ENCODE measurements at regions of chr4 and their contacts with region 1.

Region 1: DNA sequence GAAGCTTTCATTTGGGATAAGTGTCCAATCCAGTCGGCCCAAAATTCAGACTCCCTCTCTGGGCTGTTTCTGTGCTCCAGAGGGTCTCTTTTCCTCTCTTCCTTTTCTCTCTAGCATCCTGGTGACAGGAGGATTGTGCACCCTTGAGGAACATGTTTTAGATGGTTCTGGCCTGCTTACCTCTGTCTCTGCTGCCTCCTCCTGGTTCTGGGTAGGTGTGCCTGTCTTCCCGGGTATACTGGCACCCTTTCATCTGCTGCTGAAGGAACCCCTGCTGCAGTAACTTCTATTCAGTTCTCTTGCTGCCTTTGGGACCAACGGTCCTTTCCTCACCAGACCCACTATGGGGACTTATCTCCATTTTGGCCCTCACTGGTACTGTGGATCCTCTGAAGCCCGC is 53.2 kb downstream of the HMGB2 start:
- DNase-seq: peak in 1 of 4 experiments; percentile 42
- ATAC-seq: peak; percentile 79
- H3K4me3 ChIP-seq: peak overlapping the region; percentile 36
- H3K27ac ChIP-seq: peak overlapping the region; percentile 76
- H3K4me1 ChIP-seq: peaks cover 7 to 17% of the 10 kb centered on the region in 2 experiments
- H3K27me3 ChIP-seq: no peaks in the 10 kb centered on the region
- CTCF ChIP-seq: peak; percentile 54 to 63 (median 62)
- EP300 ChIP-seq: no peak
- POLR2A ChIP-seq: no peak
- RAD21 ChIP-seq: peak; percentile 37 to 50

Region 2: DNA sequence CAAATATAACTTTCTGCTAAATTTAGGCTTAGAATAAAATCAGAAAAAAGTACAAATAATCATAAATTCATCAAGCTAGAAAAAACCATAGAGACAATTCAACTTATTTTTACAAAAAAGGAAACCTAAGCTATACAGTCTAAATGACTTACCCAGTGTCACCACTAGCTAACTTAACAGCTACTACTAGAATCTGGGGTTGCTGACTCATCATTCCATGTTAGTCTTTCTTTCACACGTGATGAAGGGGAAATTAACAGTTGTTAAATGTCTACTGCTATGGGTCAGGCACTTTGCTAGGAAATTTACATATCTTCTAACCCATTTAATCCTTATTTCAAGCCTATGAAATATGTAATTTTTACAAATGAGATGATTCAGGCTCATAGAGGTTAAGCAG is 461.6 kb before region 1 on chr4:
- CTCF ChIA-PET with region 1: no interaction called
- POLR2A ChIA-PET with region 1: no interaction called
- in situ Hi-C with region 1: no loop called
- intact Hi-C with region 1: no loop called
- DNase-seq: no peak
- ATAC-seq: 0 out of 3 replicates have a peak, but pooled peaks have one; percentile 22
- H3K4me3 ChIP-seq: no peak overlapping the region
- H3K27ac ChIP-seq: no peak overlapping the region
- H3K4me1 ChIP-seq: no peaks in the 10 kb centered on the region
- H3K27me3 ChIP-seq: no peaks in the 10 kb centered on the region
- CTCF ChIP-seq: no peak
- EP300 ChIP-seq: no peak
- POLR2A ChIP-seq: no peak
- RAD21 ChIP-seq: no peak

Region 3: GRCh38 chr4:172953896-172954568 is 327.0 kb before region 1 on chr4:
- CTCF ChIA-PET with region 1: no interaction called
- POLR2A ChIA-PET with region 1: no interaction called
- in situ Hi-C with region 1: no loop called
- intact Hi-C with region 1: no loop called
- DNase-seq: no peak
- ATAC-seq: no peak
- H3K4me3 ChIP-seq: no peak overlapping the region
- H3K27ac ChIP-seq: no peak overlapping the region
- H3K4me1 ChIP-seq: peaks cover 0 to 14% of the 10 kb centered on the region in 2 experiments; a peak in 3 of 5 replicates
- H3K27me3 ChIP-seq: peaks cover 0 to 5% of the 10 kb centered on the region in 2 experiments; a peak in 1 of 5 replicates
- CTCF ChIP-seq: no peak
- EP300 ChIP-seq: no peak
- POLR2A ChIP-seq: no peak
- RAD21 ChIP-seq: no peak

Region 4: DNA sequence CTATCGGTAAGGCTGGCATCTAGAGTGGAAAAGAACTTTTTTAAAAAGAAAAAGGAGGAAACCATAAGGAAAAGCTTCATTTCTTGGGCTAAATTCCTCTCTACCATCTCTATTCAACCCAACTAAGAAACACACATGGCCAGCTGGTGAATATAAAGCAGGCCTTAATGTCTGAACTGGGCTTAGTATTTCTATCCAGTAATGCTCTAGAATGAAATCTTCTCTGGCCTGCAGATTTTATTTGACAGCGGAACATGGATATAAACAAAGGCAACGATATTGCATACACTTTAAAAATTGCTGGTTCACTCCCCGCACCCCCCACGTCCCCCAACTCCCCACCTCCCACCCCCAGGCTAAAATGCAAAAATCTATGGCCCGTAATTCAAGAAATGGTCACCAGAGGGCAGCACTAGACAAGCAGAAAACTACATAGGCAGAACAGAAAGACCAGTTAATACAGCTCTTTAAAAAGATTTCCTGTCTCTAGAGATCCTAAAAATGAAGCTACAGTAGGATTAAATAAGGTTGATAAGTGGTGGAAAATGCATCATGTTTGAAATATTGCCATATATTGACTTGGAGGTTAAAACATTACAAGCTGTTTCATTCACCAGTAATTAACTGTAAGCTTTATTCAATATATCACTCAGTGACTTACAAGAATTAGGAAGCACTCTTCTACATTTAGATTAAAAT is 267.6 kb before region 1 on chr4:
- CTCF ChIA-PET with region 1: interaction called, 3 read pairs
- POLR2A ChIA-PET with region 1: no interaction called
- in situ Hi-C with region 1: no loop called
- intact Hi-C with region 1: loop called (anchors 1 kb)
- DNase-seq: peak; percentile 57 to 62 (median 62)
- ATAC-seq: peak; percentile 82
- H3K4me3 ChIP-seq: no peak overlapping the region
- H3K27ac ChIP-seq: no peak overlapping the region
- H3K4me1 ChIP-seq: peaks cover 0 to 4% of the 10 kb centered on the region in 2 experiments; a peak in 1 of 5 replicates
- H3K27me3 ChIP-seq: no peaks in the 10 kb centered on the region; a peak in 1 of 5 replicates
- CTCF ChIP-seq: peak; percentile 42 to 74 (median 64); a peak in 5 of 6 replicates
- EP300 ChIP-seq: no peak
- POLR2A ChIP-seq: no peak
- RAD21 ChIP-seq: peak; percentile 66 to 77

Region 5: GRCh38 chr4:173025131-173025530 is 255.9 kb before region 1 on chr4:
- CTCF ChIA-PET with region 1: interaction called, 3 read pairs
- POLR2A ChIA-PET with region 1: no interaction called
- in situ Hi-C with region 1: no loop called
- intact Hi-C with region 1: loop called (anchors 1 kb)
- DNase-seq: peak; percentile 52 to 77 (median 58)
- ATAC-seq: peak; percentile 95
- H3K4me3 ChIP-seq: no peak overlapping the region
- H3K27ac ChIP-seq: no peak overlapping the region
- H3K4me1 ChIP-seq: no peaks in the 10 kb centered on the region
- H3K27me3 ChIP-seq: no peaks in the 10 kb centered on the region
- CTCF ChIP-seq: peak; percentile 72 to 87 (median 73)
- EP300 ChIP-seq: no peak
- POLR2A ChIP-seq: no peak
- RAD21 ChIP-seq: peak; percentile 87 to 93

Region 6: DNA sequence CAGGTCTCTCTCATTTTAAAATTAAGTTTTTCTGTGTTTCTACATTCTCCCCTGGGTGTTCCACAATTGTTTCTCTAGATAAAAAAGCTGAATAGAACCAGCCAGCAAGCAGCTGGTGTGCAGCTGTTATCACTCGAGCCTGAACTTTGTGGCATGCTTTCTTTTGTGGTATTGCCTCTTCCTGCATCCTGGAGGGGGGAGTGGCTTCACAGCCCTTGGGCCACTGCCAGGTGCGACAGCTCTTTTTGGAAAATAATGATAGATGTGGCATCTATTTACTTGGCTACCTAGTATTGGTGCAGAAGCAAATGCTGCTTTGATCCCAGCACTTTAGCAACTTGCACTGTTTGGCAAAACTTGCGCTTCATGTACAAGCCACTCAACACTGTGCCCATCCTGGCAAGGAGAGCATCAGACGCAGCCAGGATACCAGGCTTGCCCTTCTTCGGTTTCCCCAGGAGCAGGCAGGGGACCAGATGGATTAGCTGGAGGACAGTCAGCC is 16.3 kb before region 1 on chr4:
- CTCF ChIA-PET with region 1: no interaction called
- POLR2A ChIA-PET with region 1: interaction called, 9 read pairs
- in situ Hi-C with region 1: no loop called
- intact Hi-C with region 1: loop called (anchors 2 kb)
- DNase-seq: peak; percentile 30 to 86 (median 54)
- ATAC-seq: peak; percentile 93
- H3K4me3 ChIP-seq: no peak overlapping the region
- H3K27ac ChIP-seq: peak overlapping the region; percentile 19; the same call in 1 of the 3 replicates
- H3K4me1 ChIP-seq: peaks cover 5 to 20% of the 10 kb centered on the region in 2 experiments; a peak in 3 of 5 replicates
- H3K27me3 ChIP-seq: no peaks in the 10 kb centered on the region
- CTCF ChIP-seq: no peak
- EP300 ChIP-seq: peak; percentile 64; the same call in 1 of the 2 replicates
- POLR2A ChIP-seq: no peak
- RAD21 ChIP-seq: no peak

Region 7: GRCh38 chr4:173370477-173371291 is 89.7 kb after region 1 on chr4 and contains the start of gene SAP30:
- CTCF ChIA-PET with region 1: no interaction called
- POLR2A ChIA-PET with region 1: interaction called, 3 read pairs
- in situ Hi-C with region 1: no loop called
- intact Hi-C with region 1: loop called (anchors 5 kb)
- DNase-seq: peak; percentile 96 to 98 (median 97)
- ATAC-seq: peak; percentile 89
- H3K4me3 ChIP-seq: peak within 1 kb of the TSS; percentile 81
- H3K27ac ChIP-seq: peak within 1 kb of the TSS; percentile 94
- H3K4me1 ChIP-seq: peaks cover 3 to 6% of the 10 kb centered on the region in 2 experiments; a peak in 3 of 5 replicates
- H3K27me3 ChIP-seq: no peaks in the 10 kb centered on the region
- CTCF ChIP-seq: no peak
- EP300 ChIP-seq: no peak
- POLR2A ChIP-seq: peak; percentile 86
- RAD21 ChIP-seq: no peak
- polyA plus RNA-seq, gene SAP30: 5.9 to 6.9 TPM